ENCODE measurements at regions of chr3 and their contacts with region 1.

Region 1: GRCh38 chr3:194521514-194522260 is 34.9 kb upstream of the ATP13A3 start:
- DNase-seq: no peak
- H3K4me3 Mint-ChIP-seq: no peak overlapping the region
- H3K27ac Mint-ChIP-seq: no peak overlapping the region
- H3K4me1 Mint-ChIP-seq: peaks cover 37% of the 10 kb centered on the region
- H3K27me3 Mint-ChIP-seq: peaks cover 3% of the 10 kb centered on the region

Region 2: DNA sequence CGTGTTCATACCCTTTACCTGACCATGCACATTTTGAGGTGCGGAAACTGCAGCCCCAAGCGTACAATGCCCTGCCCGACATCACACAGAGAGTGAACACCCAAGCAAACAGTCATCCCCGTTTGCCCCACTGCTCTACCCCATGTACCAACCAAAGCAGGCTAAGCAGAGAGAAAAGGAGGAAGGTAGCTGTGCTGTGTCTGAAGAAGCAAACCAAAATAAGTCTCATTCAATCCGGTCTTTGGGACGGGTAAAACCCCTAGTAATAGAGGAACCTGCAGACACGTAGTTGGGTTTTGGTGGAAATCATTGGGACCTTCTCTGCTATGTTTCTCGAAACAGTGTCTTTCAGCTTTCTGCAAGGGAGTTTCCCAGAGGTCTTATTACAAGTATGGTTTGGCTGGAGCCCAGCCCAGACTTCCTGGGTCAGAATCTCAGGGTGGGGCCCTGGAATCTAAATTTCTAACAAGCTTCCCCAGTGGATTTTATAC is 550.4 kb before region 1 on chr3:
- intact Hi-C with region 1: loop called (anchors 2 kb)
- DNase-seq: no peak
- H3K4me3 Mint-ChIP-seq: peak overlapping the region; percentile 31
- H3K27ac Mint-ChIP-seq: peak overlapping the region; percentile 81
- H3K4me1 Mint-ChIP-seq: peaks cover 43% of the 10 kb centered on the region
- H3K27me3 Mint-ChIP-seq: peaks cover 59% of the 10 kb centered on the region

Region 3: DNA sequence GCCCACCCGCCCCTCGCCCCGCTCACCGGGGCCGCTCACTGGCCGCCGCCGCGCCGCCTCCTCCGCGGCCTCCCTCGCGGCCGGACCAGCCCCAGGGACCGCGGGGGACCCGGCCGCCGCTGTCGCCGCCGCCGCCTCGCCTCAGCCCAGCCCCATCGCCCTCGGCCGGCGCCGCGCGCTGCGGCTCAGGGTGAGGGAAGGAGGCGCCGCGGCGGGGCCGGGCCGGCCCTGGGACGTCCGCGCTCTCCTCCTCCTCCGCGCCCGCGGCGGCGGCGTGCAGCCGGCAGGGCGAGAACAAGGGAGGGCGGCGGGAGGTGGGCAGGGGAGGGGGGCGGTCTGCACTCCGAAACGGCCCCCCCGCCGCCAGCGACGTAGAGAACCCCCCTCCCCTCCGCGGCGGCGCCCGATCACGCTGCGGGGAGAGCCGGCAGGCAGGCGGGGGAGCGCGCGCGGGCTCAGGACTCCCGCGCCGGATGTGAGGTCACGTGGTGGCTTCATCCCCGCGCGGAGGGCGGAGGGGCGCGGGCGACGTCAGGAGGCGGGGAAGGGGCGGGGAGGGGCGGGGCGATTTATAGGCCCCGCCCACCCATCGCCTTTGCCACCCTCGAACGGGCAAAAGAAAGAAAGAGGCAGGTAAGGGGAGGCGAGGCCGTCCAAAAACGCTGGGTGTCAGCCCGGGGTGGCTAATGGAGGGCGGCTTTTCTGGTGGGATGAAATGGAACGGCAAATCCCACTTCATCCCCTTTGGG is 35.0 kb before region 1 on chr3 and contains the start of gene ATP13A3:
- intact Hi-C with region 1: loop called (anchors 1 kb)
- DNase-seq: peak; percentile 87
- H3K4me3 Mint-ChIP-seq: peak within 1 kb of the TSS; percentile 96
- H3K27ac Mint-ChIP-seq: peak within 1 kb of the TSS; percentile 95
- H3K4me1 Mint-ChIP-seq: peaks cover 55% of the 10 kb centered on the region
- H3K27me3 Mint-ChIP-seq: peaks cover 1% of the 10 kb centered on the region
- total RNA-seq, gene ATP13A3: 198 and 206 TPM in 2 replicates

Region 4: DNA sequence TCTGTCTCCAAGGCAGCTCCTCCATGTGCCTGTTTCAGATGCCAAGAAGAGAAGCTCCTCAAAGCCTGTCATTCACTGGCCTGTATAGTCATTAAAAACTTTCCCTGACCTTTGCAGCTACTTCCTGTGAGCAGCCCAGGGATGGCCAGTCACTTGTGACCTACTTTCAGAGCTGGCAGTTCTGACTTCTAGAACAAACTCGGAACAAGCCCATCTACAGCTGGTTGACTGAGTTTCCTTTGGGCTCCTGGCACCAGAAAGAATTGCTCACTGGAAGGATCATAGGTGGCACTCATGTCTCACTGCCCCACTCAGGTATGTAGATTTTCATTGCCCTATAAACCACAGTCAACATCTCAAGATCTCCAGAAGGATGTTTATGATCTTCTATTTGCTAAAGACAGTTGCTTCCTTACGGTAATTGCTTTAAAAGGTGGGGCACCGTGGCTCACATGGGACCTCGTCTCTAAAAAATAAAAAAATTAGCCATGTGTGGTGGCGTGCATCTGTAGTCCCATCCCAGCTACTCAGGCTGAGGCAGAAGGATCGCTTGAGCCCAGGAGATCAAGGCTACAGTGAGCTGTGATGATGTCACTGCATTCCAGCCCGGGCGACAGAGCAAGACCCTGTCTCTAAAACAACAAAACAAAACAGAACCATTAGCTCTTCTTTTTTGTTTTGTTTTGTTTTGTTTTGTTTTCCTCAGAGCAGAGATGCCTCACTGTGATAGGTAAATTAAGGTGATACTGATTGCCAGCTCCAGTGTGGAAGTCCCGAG is 23.7 kb before region 1 on chr3:
- intact Hi-C with region 1: no loop called
- DNase-seq: no peak
- H3K4me3 Mint-ChIP-seq: no peak overlapping the region
- H3K27ac Mint-ChIP-seq: no peak overlapping the region
- H3K4me1 Mint-ChIP-seq: peaks cover 18% of the 10 kb centered on the region
- H3K27me3 Mint-ChIP-seq: no peaks in the 10 kb centered on the region

Region 5: DNA sequence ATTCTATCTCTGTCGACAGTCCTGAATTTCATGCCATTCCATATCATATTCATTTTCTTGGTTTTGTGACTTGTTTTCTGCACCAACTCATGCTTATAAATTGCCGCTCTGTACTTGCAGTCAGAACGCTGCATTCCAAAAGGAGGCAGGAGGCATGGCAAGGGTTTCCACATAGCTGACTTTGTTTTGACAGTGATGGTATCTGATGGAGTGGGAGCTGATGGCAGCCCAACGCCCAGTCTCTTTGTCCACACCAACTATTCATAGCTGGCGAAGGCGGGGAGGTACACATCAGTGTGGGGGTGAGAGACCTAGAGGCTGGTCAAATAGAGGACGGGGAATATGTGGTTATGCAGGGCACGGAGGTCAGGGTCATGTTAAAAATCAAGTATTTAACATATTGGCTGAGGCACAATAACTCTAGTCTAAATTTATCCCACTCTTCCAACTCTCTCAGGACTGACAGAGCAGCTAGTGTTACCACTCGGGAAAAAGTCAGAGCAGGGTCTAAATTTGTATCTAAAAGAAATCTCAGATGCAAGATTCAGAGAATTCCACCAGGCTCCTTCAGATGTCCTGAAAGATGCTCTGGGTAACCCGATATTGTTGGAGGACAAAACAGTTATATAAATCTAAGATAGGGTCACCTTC is 32.9 kb after region 1 on chr3:
- intact Hi-C with region 1: loop called (anchors 2 kb)
- DNase-seq: no peak
- H3K4me3 Mint-ChIP-seq: no peak overlapping the region
- H3K27ac Mint-ChIP-seq: no peak overlapping the region
- H3K4me1 Mint-ChIP-seq: peaks cover 10% of the 10 kb centered on the region
- H3K27me3 Mint-ChIP-seq: peaks cover 3% of the 10 kb centered on the region